Activated B cell treated with CpG ODN at 0.5 μM for 24 hours (primary cell): ENCODE measurements at regions of chr22 and their contacts with region 1.

Region 1: DNA sequence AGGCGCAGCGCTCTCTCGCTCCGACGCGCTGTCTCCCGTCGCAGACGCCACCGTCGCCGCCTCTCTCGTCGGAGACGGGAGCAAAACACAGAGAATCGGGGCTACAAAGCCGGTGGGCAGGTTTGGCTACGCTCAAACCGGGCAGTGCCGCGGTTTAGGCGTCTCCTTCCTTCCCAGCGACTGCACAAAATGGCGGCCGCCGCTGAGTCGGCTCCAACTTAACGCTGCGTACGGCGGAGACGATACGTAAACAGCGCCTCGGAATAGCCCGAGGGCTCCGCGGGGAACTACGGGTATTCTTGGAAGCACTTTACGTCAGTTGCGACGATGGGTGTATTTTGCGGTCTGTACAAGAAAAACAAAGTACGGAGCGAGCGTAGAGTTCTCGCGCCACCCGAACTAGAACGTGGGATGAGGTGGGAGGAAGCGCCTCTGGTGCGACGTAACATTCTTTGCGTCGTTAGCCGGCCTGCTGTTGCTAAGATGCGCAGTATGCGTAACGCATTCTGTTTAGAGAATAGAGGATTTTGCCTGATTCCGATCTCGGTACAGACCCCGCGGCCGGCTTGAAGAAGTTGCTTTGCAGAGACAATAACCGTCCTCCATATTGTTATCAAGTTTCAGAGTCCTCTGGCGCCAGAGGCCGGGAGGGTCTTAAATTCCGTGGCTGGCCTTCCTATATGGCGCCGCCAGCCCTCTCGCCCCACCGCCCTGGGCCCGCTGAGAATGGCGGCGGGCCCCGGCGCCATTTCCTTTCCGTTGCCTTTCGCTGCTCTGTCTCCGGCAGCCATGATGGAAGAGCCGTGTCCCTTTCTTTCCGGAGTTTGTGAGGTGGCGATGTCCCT is at the start of gene DDX17:
- DNase-seq: peak; percentile 91
- ATAC-seq: peak; percentile 89
- H3K4me3 Mint-ChIP-seq: peak within 1 kb of the TSS; percentile 99
- H3K27ac Mint-ChIP-seq: peak within 1 kb of the TSS; percentile 100
- H3K4me1 Mint-ChIP-seq: peaks cover 41% of the 10 kb centered on the region
- H3K27me3 Mint-ChIP-seq: no peaks in the 10 kb centered on the region
- CTCF ChIP-seq: no peak
- total RNA-seq, gene DDX17: 533 and 612 TPM in 2 replicates

Region 2: GRCh38 chr22:38181453-38182247 is 324.7 kb before region 1 on chr22 and contains the start of gene PLA2G6:
- CTCF ChIA-PET with region 1: no interaction called
- POLR2A ChIA-PET with region 1: no interaction called
- intact Hi-C with region 1: loop called (anchors 1 kb)
- DNase-seq: peak; percentile 97
- ATAC-seq: peak; percentile 97
- H3K4me3 Mint-ChIP-seq: peak within 1 kb of the TSS; percentile 92
- H3K27ac Mint-ChIP-seq: peak within 1 kb of the TSS; percentile 85
- H3K4me1 Mint-ChIP-seq: peaks cover 43% of the 10 kb centered on the region
- H3K27me3 Mint-ChIP-seq: peaks cover 4% of the 10 kb centered on the region
- CTCF ChIP-seq: no peak
- total RNA-seq, gene PLA2G6: 53.0 and 64.0 TPM in 2 replicates

Region 3: GRCh38 chr22:38317122-38317994 is 189.0 kb before region 1 on chr22 and contains the start of gene CSNK1E:
- CTCF ChIA-PET with region 1: no interaction called
- POLR2A ChIA-PET with region 1: no interaction called
- intact Hi-C with region 1: loop called (anchors 5 kb)
- DNase-seq: peak; percentile 72
- ATAC-seq: peak; percentile 58
- H3K4me3 Mint-ChIP-seq: peak within 1 kb of the TSS; percentile 82
- H3K27ac Mint-ChIP-seq: peak within 1 kb of the TSS; percentile 88
- H3K4me1 Mint-ChIP-seq: peaks cover 50% of the 10 kb centered on the region
- H3K27me3 Mint-ChIP-seq: no peaks in the 10 kb centered on the region
- CTCF ChIP-seq: no peak
- total RNA-seq, gene CSNK1E: 80.6 and 85.2 TPM in 2 replicates

Region 4: GRCh38 chr22:38490915-38491314 is 15.4 kb before region 1 on chr22:
- CTCF ChIA-PET with region 1: no interaction called
- POLR2A ChIA-PET with region 1: interaction called, 8 read pairs
- intact Hi-C with region 1: loop called (anchors 2 kb)
- DNase-seq: no peak
- ATAC-seq: no peak
- H3K4me3 Mint-ChIP-seq: no peak overlapping the region
- H3K27ac Mint-ChIP-seq: peak overlapping the region; percentile 76
- H3K4me1 Mint-ChIP-seq: peaks cover 5% of the 10 kb centered on the region
- H3K27me3 Mint-ChIP-seq: no peaks in the 10 kb centered on the region
- CTCF ChIP-seq: no peak

Region 5: DNA sequence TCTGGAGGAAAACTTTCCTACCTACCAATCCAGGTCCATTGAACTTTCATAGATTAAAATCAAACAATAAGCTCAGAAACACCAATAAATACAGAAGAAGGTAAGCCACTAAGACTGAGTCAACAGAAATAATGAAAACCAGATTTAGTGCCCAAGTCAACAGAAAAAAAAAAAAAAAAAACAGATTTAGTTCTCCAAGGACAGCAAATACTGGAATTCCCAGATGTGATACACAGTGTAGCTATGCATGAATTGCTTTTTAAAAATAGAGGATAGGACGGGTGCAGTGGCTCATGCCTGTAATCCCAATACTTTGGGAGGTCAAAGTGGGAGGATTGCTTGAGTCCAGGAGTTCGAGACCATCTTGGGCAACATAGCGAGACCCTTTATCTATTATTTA is 47.9 kb after region 1 on chr22:
- CTCF ChIA-PET with region 1: no interaction called
- POLR2A ChIA-PET with region 1: no interaction called
- intact Hi-C with region 1: no loop called
- DNase-seq: no peak
- ATAC-seq: no peak
- H3K4me3 Mint-ChIP-seq: no peak overlapping the region
- H3K27ac Mint-ChIP-seq: no peak overlapping the region
- H3K4me1 Mint-ChIP-seq: peaks cover 8% of the 10 kb centered on the region
- H3K27me3 Mint-ChIP-seq: no peaks in the 10 kb centered on the region
- CTCF ChIP-seq: no peak

Region 6: GRCh38 chr22:38681784-38682335 is 175.5 kb after region 1 on chr22 and contains the start of gene TOMM22:
- CTCF ChIA-PET with region 1: no interaction called
- POLR2A ChIA-PET with region 1: no interaction called
- intact Hi-C with region 1: loop called (anchors 1 kb)
- DNase-seq: peak; percentile 84
- ATAC-seq: peak; percentile 98
- H3K4me3 Mint-ChIP-seq: peak within 1 kb of the TSS; percentile 97
- H3K27ac Mint-ChIP-seq: peak within 1 kb of the TSS; percentile 92
- H3K4me1 Mint-ChIP-seq: peaks cover 20% of the 10 kb centered on the region
- H3K27me3 Mint-ChIP-seq: no peaks in the 10 kb centered on the region
- CTCF ChIP-seq: no peak
- total RNA-seq, gene TOMM22: 99.4 and 109 TPM in 2 replicates